ENCODE measurements at regions of chr16 and their contacts with region 1.

Region 1: DNA sequence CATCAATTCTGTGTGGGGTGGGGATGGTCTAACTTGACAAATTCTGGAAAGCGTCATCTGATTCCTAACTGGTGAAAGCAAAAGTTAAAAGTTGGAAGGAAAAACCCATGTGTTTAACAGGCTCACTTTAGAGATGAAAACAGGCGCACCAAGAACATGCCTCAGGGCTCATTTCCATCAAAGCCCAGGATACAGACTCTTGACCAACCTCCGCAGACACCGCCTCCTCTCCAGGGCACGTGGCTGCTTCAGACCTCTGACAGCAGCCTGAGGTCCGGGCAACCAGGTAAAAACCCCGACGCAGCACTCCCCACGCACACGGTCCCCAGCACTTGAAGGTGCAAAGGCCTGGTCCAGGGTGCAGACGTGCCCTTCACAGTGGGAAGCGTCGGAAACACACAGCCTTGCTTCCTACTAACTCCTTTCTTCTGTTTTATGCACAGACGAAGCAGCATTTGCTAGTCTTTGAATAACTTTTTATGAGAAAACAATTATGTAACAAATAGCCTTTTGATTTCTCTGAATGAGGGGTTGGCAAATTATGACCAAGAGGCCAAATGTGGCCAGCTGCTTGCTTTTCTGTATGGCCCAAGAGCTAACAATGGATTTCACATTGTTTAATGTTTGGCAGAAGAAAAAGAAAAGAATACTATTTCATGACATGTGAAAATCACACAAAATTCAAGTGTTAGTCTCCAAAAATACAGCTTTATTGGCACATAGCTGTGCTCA is 44.2 kb upstream of the TRAP1 start:
- DNase-seq: no peak
- H3K4me3 ChIP-seq: no peak overlapping the region
- H3K27ac ChIP-seq: no peak overlapping the region
- H3K4me1 ChIP-seq: no peaks in the 10 kb centered on the region
- H3K27me3 ChIP-seq: no peaks in the 10 kb centered on the region
- CTCF ChIP-seq: no peak

Region 2: GRCh38 chr16:2308089-2308962 is 1453.2 kb before region 1 on chr16:
- CTCF ChIA-PET with region 1: interaction called, 10 read pairs
- POLR2A ChIA-PET with region 1: no interaction called
- intact Hi-C with region 1: no loop called
- DNase-seq: peak in 1 of 2 experiments; percentile 60
- H3K4me3 ChIP-seq: no peak overlapping the region
- H3K27ac ChIP-seq: no peak overlapping the region
- H3K4me1 ChIP-seq: peaks cover 6% of the 10 kb centered on the region
- H3K27me3 ChIP-seq: no peaks in the 10 kb centered on the region
- CTCF ChIP-seq: no peak

Region 3: DNA sequence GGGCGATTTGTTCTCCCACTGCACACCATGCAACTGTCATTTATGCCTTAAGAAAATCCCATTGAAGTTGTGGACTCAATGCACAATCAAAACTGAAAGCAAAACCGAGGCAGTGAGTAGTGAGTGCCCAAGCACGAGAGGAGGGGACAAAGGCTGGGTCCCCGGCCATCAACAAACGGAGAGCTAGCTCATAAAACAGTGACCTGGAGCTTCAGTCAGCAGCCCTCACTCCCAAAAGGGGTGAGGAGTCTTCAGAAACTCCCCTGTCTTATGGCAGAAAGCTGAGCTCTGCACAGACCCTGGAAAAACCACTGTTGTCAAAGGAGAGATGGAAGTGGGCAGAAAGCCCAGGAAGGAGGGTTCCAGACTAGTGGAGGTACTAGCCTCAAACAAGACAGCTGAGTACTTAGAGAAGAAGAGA is 257.8 kb after region 1 on chr16:
- CTCF ChIA-PET with region 1: no interaction called
- POLR2A ChIA-PET with region 1: interaction called, 19 read pairs
- intact Hi-C with region 1: no loop called
- DNase-seq: no peak
- H3K4me3 ChIP-seq: no peak overlapping the region
- H3K27ac ChIP-seq: no peak overlapping the region
- H3K4me1 ChIP-seq: peaks cover 17% of the 10 kb centered on the region
- H3K27me3 ChIP-seq: no peaks in the 10 kb centered on the region
- CTCF ChIP-seq: no peak

Measured in PC-9 (cell line).